A673 (cell line): ENCODE measurements at regions of chr21 and their contacts with region 1.

Region 1: GRCh38 chr21:39463308-39463707 is 11.5 kb downstream of the SH3BGR start:
- DNase-seq: no peak
- H3K4me3 ChIP-seq: no peak overlapping the region
- H3K27ac ChIP-seq: no peak overlapping the region
- H3K4me1 ChIP-seq: no peaks in the 10 kb centered on the region
- H3K27me3 ChIP-seq: no peaks in the 10 kb centered on the region
- CTCF ChIP-seq: no peak

Region 2: DNA sequence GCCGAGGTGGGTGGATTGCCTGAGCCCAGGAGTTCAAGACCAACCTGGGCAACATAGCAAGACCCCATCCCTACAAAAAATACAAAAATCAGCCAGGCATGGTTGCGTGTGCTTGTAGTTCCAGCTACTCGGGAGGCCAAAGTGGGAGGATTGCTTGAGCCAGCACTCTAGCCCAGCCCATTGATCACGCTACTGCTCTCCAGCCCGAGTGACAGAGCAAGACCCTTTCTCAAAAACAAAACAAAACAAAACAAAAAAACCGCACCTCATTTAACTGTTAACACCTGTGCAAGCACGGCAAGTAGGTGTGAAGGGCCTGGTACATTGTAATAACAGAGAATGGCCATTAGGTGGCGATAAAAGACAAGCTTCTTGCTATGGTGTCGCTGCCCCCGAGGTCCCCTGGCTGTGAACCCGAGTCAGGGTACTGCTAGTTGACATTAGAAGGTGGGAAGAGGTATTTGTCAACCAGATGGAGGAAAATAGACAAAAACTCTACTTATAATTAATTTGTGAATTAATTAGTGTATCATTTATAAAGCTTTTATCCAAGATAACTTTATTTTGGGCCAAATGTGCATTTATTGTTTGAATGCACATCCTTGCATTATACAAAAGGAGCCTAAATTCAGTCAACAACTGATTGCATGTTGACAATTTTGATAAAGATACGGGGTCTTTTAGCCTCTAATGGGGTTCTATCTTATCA is 55.0 kb after region 1 on chr21:
- CTCF ChIA-PET with region 1: no interaction called
- POLR2A ChIA-PET with region 1: no interaction called
- intact Hi-C with region 1: no loop called
- DNase-seq: peak; percentile 72
- H3K4me3 ChIP-seq: no peak overlapping the region
- H3K27ac ChIP-seq: no peak overlapping the region
- H3K4me1 ChIP-seq: no peaks in the 10 kb centered on the region
- H3K27me3 ChIP-seq: no peaks in the 10 kb centered on the region
- CTCF ChIP-seq: peak; percentile 89

Region 3: DNA sequence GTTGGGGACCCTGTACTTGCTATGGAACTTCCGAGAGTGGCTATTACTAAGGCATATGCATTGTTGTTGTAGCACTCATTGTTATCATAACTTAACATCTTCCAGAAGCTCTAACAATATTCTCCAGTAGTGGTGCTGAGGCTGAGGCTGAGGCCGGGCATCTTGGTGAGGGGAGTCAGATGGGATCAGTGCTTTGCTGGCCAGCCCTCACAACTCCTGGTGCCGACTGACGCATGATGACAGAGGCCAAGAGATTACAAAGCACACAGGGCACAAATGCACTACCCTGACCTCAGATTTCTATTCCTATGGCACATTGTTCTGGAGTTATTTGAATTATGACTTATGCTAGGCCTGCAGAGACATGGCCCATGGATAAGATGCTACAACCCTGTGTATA is 273.4 kb after region 1 on chr21:
- CTCF ChIA-PET with region 1: no interaction called
- POLR2A ChIA-PET with region 1: interaction called, 10 read pairs
- intact Hi-C with region 1: no loop called
- DNase-seq: no peak
- H3K4me3 ChIP-seq: no peak overlapping the region
- H3K27ac ChIP-seq: no peak overlapping the region
- H3K4me1 ChIP-seq: no peaks in the 10 kb centered on the region
- H3K27me3 ChIP-seq: no peaks in the 10 kb centered on the region
- CTCF ChIP-seq: no peak